ENCODE measurements at regions of chr4 and their contacts with region 1.

Region 1: GRCh38 chr4:77711469-77711868 is 105.8 kb downstream of the CXCL13 start:
- DNase-seq: no peak
- H3K4me3 ChIP-seq: no peak overlapping the region
- H3K4me3 Mint-ChIP-seq: peak overlapping the region in 1 of 7 donors; percentile 34
- H3K27ac ChIP-seq: no peak overlapping the region
- H3K27ac Mint-ChIP-seq: peak overlapping the region in 2 of 8 donors; percentile 19 to 21
- H3K4me1 ChIP-seq: no peaks in the 10 kb centered on the region
- H3K4me1 Mint-ChIP-seq: peaks cover 7 to 25% (median 19%) of the 10 kb centered on the region in 3 donors
- H3K27me3 ChIP-seq: no peaks in the 10 kb centered on the region
- H3K27me3 Mint-ChIP-seq: no peaks in the 10 kb centered on the region

Region 2: DNA sequence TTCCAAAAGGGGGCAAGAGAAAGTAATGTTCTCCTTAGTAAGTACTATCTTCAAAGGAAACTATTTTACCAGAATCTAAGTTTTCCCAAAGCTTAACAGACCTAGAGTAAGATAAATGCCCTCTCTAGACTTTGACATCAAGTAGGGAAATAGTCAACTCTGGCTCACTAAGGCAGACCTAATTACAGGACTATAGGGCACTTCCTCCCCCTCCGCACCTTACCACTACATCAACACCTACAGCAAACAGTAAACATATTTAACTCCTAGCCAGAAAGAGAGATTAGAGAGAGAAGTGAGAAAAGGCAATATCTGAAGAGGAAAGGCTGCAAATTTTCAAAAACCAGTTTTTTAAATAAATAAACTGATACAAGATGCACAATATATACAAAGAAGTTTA is 47.3 kb after region 1 on chr4:
- CTCF ChIA-PET with region 1: no interaction called
- POLR2A ChIA-PET with region 1: interaction called, 13 read pairs
- DNase-seq: no peak
- H3K4me3 ChIP-seq: no peak overlapping the region
- H3K4me3 Mint-ChIP-seq: peak overlapping the region in 1 of 7 donors; percentile 17
- H3K27ac ChIP-seq: no peak overlapping the region
- H3K27ac Mint-ChIP-seq: peak overlapping the region in 6 of 8 donors; percentile 7 to 78 (median 56)
- H3K4me1 ChIP-seq: peaks cover 15% of the 10 kb centered on the region
- H3K4me1 Mint-ChIP-seq: peaks cover 52 to 76% (median 73%) of the 10 kb centered on the region in 3 donors
- H3K27me3 ChIP-seq: no peaks in the 10 kb centered on the region
- H3K27me3 Mint-ChIP-seq: no peaks in the 10 kb centered on the region